ENCODE measurements at regions of chr4 and their contacts with region 1.

Region 1: DNA sequence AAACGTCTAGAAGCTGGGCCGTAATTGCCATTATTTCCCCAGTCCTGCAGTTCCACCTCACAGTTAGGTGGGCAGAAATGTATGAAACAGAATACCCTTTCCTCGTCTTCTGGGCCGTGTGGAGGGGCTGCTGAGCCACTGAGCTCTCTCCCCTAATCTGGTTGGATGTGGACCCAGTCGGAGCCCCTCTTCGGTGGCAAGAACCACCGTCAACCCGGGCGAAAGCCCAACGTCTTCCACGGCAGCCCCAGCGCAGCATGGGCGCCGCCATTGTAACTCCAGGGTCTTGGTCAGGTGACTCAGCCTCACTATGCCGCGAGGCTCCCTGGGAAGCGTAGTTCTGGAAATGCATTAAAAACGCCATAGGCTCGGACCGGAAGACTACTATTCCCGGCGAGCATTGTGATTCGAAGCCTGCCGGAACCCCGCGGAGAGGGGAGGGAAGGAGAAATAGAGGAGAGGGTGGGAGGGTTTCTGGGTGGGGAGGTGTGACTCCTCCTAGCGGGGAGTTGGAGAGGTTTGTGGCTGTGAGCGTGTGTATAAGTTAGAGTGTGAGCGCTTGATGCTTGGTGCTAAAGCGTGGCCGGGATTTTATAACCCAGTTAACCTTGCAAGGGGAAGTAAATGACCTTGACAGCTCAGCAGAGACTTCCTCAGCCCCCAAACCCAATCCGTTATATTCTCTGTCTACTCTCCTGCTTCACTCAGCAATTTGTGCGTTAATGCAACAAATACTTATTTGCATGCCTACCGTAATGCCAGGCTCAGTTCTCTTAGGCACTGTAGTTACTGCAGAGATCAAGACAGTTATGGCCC is at the start of gene GATB:
- DNase-seq: peak; percentile 95 to 97
- H3K4me3 ChIP-seq: peak within 1 kb of the TSS; percentile 67 to 73
- H3K27ac ChIP-seq: peak within 1 kb of the TSS; percentile 57
- H3K4me1 ChIP-seq: peaks cover 7% of the 10 kb centered on the region
- H3K27me3 ChIP-seq: no peaks in the 10 kb centered on the region
- CTCF ChIP-seq: peak in 2 of 3 experiments; percentile 21 to 56
- POLR2A ChIP-seq: no peak
- total RNA-seq, gene GATB: 17.7 TPM

Region 2: DNA sequence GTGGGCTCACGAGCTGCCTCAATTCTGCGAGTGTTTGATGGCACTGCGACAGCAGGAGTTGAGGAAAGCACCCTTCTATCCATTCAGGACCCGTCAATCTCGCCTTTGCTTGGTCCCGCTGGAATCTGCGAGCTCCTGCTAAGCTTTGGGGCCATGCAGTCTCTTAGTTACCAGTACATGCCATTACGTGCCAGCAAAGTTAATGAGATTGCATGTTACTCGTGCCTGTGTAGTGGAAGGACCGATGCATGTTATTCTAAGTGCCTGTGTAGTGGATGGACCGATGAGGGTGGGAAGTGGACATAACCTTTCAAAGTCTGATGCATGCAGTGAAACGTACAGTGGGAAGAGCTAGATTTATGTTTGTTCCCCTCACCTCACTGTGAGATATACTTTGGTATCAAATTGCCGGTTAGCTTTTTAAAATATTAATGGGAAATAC is 660.9 kb before region 1 on chr4:
- intact Hi-C with region 1: loop called (anchors 10 kb)
- DNase-seq: no peak
- H3K4me3 ChIP-seq: peak overlapping the region; percentile 93 to 96
- H3K27ac ChIP-seq: peak overlapping the region; percentile 93
- H3K4me1 ChIP-seq: peaks cover 26% of the 10 kb centered on the region
- H3K27me3 ChIP-seq: no peaks in the 10 kb centered on the region
- CTCF ChIP-seq: no peak
- POLR2A ChIP-seq: no peak

Measured in vagina (tissue), 2 donors.